ENCODE measurements at regions of chr2 and their contacts with region 1.

Region 1: GRCh38 chr2:108637304-108637669 is 82.0 kb upstream of the RANBP2 start:
- DNase-seq: no peak
- ATAC-seq: no peak
- H3K4me3 ChIP-seq: no peak overlapping the region
- H3K27ac ChIP-seq: peak overlapping the region; percentile 81
- H3K4me1 ChIP-seq: peaks cover 68% of the 10 kb centered on the region
- H3K27me3 ChIP-seq: no peaks in the 10 kb centered on the region
- CTCF ChIP-seq: no peak

Region 2: GRCh38 chr2:108594132-108594981 is 42.9 kb before region 1 on chr2:
- CTCF ChIA-PET with region 1: interaction called, 4 read pairs
- POLR2A ChIA-PET with region 1: no interaction called
- in situ Hi-C with region 1: no loop called
- intact Hi-C with region 1: loop called (anchors 2 kb)
- DNase-seq: no peak
- ATAC-seq: peak; percentile 72
- H3K4me3 ChIP-seq: peak overlapping the region in 1 of 2 experiments; percentile 14; a peak in 2 of 4 replicates
- H3K27ac ChIP-seq: peak overlapping the region; percentile 86
- H3K4me1 ChIP-seq: peaks cover 34% of the 10 kb centered on the region
- H3K27me3 ChIP-seq: no peaks in the 10 kb centered on the region
- CTCF ChIP-seq: no peak

Region 3: GRCh38 chr2:108607706-108608301 is 29.5 kb before region 1 on chr2:
- CTCF ChIA-PET with region 1: interaction called, 21 read pairs
- POLR2A ChIA-PET with region 1: interaction called, 8 read pairs
- in situ Hi-C with region 1: no loop called
- intact Hi-C with region 1: loop called (anchors 2 kb)
- DNase-seq: no peak
- ATAC-seq: peak; percentile 77; the same call in 1 of the 2 replicates
- H3K4me3 ChIP-seq: no peak overlapping the region
- H3K27ac ChIP-seq: peak overlapping the region; percentile 75
- H3K4me1 ChIP-seq: peaks cover 51% of the 10 kb centered on the region
- H3K27me3 ChIP-seq: no peaks in the 10 kb centered on the region
- CTCF ChIP-seq: peak; percentile 81

Region 4: GRCh38 chr2:108616751-108617161 is 20.5 kb before region 1 on chr2:
- CTCF ChIA-PET with region 1: interaction called, 26 read pairs
- POLR2A ChIA-PET with region 1: interaction called, 4 read pairs
- in situ Hi-C with region 1: no loop called
- intact Hi-C with region 1: no loop called
- DNase-seq: no peak
- ATAC-seq: peak; percentile 46
- H3K4me3 ChIP-seq: peak overlapping the region in 1 of 2 experiments; percentile 3; a peak in 1 of 4 replicates
- H3K27ac ChIP-seq: peak overlapping the region; percentile 97
- H3K4me1 ChIP-seq: peaks cover 95% of the 10 kb centered on the region
- H3K27me3 ChIP-seq: no peaks in the 10 kb centered on the region
- CTCF ChIP-seq: no peak

Region 5: GRCh38 chr2:108691447-108691846 is 54.2 kb after region 1 on chr2:
- CTCF ChIA-PET with region 1: no interaction called
- POLR2A ChIA-PET with region 1: interaction called, 15 read pairs
- in situ Hi-C with region 1: no loop called
- intact Hi-C with region 1: no loop called
- DNase-seq: no peak
- ATAC-seq: no peak
- H3K4me3 ChIP-seq: no peak overlapping the region
- H3K27ac ChIP-seq: no peak overlapping the region; the same call in 1 of the 2 replicates
- H3K4me1 ChIP-seq: no peaks in the 10 kb centered on the region; the same call in 1 of the 2 replicates
- H3K27me3 ChIP-seq: no peaks in the 10 kb centered on the region
- CTCF ChIP-seq: no peak

Region 6: GRCh38 chr2:109322111-109322510 is 684.8 kb after region 1 on chr2:
- CTCF ChIA-PET with region 1: no interaction called
- POLR2A ChIA-PET with region 1: no interaction called
- in situ Hi-C with region 1: no loop called
- intact Hi-C with region 1: no loop called
- DNase-seq: no peak
- ATAC-seq: no peak
- H3K4me3 ChIP-seq: no peak overlapping the region
- H3K27ac ChIP-seq: no peak overlapping the region
- H3K4me1 ChIP-seq: no peaks in the 10 kb centered on the region; the same call in 1 of the 2 replicates
- H3K27me3 ChIP-seq: 0 out of 2 replicates have a peak, but pooled peaks cover 2% of the 10 kb centered on the region
- CTCF ChIP-seq: no peak